ENCODE measurements at regions of chr22 and their contacts with region 1.

Region 1: GRCh38 chr22:45968751-45969413 is 8.1 kb downstream of the WNT7B start:
- DNase-seq: peak; percentile 71
- ATAC-seq: peak; percentile 71
- H3K4me3 ChIP-seq: peak overlapping the region in 1 of 2 experiments; percentile 33; a peak in 1 of 4 replicates
- H3K27ac ChIP-seq: peak overlapping the region; percentile 93
- H3K4me1 ChIP-seq: peaks cover 84% of the 10 kb centered on the region
- H3K27me3 ChIP-seq: no peaks in the 10 kb centered on the region
- CTCF ChIP-seq: no peak

Region 2: GRCh38 chr22:45918459-45919370 is 50.2 kb before region 1 on chr22:
- CTCF ChIA-PET with region 1: no interaction called
- POLR2A ChIA-PET with region 1: no interaction called
- in situ Hi-C with region 1: no loop called
- intact Hi-C with region 1: loop called (anchors 5 kb)
- DNase-seq: no peak
- ATAC-seq: peak; percentile 60
- H3K4me3 ChIP-seq: no peak overlapping the region
- H3K27ac ChIP-seq: peak overlapping the region; percentile 74
- H3K4me1 ChIP-seq: peaks cover 37% of the 10 kb centered on the region
- H3K27me3 ChIP-seq: no peaks in the 10 kb centered on the region
- CTCF ChIP-seq: no peak

Region 3: DNA sequence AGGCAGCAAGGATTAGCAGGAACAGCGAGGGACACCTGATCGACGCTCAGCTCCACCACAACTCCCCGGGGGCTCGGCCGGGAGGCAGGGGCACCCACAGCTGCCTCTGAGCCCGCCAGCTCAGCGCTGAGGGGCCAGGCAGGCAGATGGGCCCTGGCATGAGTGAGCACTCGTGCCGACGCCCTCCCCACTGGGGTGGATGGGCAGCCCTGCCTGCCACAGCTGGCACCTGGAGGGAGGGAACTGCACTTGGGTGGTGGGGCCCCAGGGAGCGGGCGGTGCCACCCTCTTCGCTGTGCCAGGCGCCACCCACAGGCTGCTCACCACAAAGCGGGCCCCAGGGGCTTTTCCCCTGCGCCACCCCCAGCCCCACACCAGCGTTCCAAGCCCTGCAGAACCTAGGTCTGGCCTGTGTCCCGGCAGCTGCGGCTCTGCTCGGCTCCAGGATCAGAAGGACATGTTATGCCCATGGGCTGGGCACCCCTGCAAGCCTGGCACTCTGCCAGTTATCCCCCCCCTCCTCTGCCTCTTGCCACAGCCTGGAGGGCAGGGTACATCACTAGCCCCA is 20.7 kb before region 1 on chr22:
- CTCF ChIA-PET with region 1: interaction called, 14 read pairs
- POLR2A ChIA-PET with region 1: no interaction called
- in situ Hi-C with region 1: no loop called
- intact Hi-C with region 1: no loop called
- DNase-seq: no peak
- ATAC-seq: peak; percentile 39; the same call in 1 of the 2 replicates
- H3K4me3 ChIP-seq: no peak overlapping the region
- H3K27ac ChIP-seq: peak overlapping the region; percentile 61
- H3K4me1 ChIP-seq: peaks cover 54% of the 10 kb centered on the region
- H3K27me3 ChIP-seq: no peaks in the 10 kb centered on the region
- CTCF ChIP-seq: no peak